ENCODE measurements at regions of chr14 and their contacts with region 1.

Region 1: DNA sequence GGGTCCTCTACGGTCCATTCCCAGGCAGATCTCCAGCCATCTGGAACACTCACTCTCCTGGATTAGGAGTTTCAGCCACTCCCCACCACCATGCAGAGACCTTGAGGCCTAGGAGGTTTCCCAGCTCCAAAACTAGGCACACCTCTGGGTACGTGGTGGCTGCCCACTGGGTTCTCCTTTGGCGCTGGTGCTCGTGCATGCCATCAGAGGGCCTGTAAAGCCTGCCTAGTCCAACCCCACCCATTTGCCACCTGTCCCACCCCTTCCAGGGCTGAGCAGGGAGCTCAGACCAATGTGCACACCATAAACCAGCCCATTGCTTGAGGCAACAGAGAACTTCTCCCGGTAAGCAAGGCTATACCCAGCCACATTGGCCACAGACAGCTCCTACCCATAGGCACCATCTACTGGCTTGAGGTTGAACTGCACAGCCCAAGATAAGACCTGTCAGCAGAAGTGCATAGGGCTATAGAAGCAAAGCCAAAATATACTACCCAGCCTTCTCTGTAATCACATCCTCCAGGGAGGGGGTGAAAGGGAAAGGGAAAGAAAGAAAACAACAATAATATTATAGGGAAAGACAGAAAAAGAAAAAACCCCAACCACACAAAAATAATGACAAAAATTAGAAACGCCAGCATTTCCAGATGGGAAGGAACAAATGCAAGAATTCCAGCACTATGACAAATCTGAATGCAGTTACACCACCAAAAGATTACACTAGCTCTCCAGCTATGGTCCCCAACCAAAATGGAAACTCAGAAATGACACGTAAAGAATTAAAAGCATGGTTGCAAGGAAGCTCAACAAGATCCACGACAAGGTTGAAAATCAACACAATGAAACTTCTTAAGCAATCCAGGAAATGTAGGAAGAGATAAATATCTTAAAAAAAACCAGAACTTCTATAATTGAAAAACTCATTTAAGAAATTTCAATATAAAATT is 111.9 kb upstream of the CCDC175 start:
- DNase-seq: peak; percentile 65
- H3K4me3 Mint-ChIP-seq: no peak overlapping the region
- H3K27ac Mint-ChIP-seq: no peak overlapping the region
- H3K4me1 Mint-ChIP-seq: no peaks in the 10 kb centered on the region
- H3K27me3 Mint-ChIP-seq: peaks cover 33% of the 10 kb centered on the region

Region 2: DNA sequence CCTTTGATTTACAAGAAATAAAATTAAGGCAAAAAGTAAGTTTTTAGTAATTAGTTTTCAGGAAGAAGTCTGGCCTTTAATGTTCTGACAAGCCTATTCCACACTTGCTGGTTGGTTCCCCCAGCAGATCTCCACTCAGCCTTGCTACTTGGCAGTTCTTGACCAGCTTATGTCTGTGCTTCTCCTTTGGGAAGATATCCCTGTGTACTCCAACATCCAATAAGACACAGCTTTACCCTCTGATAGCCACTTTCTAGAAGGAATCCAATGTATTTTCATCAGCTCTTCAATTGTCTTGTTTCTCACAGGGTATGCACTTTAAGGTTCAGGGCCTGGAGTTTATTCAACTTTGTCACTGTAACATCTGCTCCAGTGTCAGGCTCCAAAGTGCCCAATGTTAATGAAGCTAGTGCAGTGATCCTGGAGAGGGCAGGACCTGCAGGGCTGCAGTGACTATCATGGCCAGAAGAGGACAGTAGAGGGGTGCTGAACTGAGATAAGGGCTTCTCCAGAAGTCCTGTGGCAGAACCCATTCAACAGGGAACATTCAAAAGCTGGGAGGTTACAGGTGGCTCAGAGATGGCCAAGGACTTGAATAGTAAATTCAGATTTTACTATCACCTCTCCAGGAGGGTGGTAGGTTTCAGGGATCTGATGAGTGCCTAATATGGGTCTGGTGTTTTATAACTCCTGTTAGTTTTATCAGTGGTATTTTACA is 181.3 kb before region 1 on chr14:
- CTCF ChIA-PET with region 1: no interaction called
- intact Hi-C with region 1: loop called (anchors 1 kb)
- DNase-seq: peak; percentile 74
- H3K4me3 Mint-ChIP-seq: no peak overlapping the region
- H3K27ac Mint-ChIP-seq: no peak overlapping the region
- H3K4me1 Mint-ChIP-seq: peaks cover 7% of the 10 kb centered on the region
- H3K27me3 Mint-ChIP-seq: peaks cover 5% of the 10 kb centered on the region

Region 3: DNA sequence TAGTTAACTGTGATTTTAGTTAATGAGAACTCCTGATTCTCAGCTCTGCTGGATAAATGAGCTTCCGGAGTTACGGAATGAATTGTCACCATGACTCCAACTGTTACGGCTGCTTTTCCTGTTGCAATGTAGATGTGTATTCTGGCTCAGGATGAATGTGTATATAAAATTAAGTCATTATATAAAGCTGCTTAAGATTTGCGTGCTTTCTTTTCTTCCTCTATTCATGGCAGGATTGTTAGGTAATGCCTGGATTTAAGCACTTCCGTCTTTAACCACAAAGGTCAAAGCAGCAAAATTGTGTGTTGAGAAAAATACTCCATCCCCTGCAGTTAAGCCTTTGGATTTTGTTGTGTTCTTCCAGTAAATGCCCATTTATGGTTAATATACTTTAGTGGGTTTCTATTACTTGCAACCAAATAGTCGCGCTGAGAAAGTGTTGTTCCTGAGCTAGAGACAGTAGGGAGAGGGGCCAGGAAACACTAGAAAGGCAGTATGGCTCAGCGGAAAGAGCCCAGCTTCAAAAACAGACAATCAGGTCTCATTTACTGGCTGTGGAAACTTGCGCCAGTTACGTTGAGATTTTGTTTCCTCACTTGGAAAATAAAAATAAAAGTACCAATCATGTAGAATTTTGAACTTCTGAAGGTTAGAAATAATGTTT is 102.5 kb before region 1 on chr14:
- CTCF ChIA-PET with region 1: no interaction called
- intact Hi-C with region 1: loop called (anchors 2 kb)
- DNase-seq: no peak
- H3K4me3 Mint-ChIP-seq: peak overlapping the region; percentile 19
- H3K27ac Mint-ChIP-seq: no peak overlapping the region
- H3K4me1 Mint-ChIP-seq: peaks cover 4% of the 10 kb centered on the region
- H3K27me3 Mint-ChIP-seq: no peaks in the 10 kb centered on the region

Region 4: DNA sequence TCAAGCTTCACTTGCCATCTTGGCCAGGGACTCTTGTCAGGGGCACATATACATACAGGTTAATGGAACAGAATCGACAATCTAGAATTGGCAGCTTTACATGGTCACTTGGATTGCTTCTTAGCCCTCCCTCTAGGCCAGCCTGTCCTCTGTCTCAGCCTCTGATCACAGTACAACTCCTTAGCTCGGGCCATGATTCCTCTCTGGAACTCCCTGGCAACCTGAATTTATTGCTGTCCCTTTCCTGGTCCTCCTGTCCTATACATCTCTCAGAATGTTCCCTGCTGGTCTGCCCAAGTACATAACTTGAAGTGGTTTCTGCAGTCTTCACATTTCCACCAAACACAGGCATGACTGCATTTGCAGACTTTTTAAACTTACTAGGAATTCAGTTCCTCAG is 32.0 kb before region 1 on chr14:
- CTCF ChIA-PET with region 1: no interaction called
- intact Hi-C with region 1: no loop called
- DNase-seq: no peak
- H3K4me3 Mint-ChIP-seq: no peak overlapping the region
- H3K27ac Mint-ChIP-seq: no peak overlapping the region
- H3K4me1 Mint-ChIP-seq: no peaks in the 10 kb centered on the region
- H3K27me3 Mint-ChIP-seq: no peaks in the 10 kb centered on the region

Region 5: DNA sequence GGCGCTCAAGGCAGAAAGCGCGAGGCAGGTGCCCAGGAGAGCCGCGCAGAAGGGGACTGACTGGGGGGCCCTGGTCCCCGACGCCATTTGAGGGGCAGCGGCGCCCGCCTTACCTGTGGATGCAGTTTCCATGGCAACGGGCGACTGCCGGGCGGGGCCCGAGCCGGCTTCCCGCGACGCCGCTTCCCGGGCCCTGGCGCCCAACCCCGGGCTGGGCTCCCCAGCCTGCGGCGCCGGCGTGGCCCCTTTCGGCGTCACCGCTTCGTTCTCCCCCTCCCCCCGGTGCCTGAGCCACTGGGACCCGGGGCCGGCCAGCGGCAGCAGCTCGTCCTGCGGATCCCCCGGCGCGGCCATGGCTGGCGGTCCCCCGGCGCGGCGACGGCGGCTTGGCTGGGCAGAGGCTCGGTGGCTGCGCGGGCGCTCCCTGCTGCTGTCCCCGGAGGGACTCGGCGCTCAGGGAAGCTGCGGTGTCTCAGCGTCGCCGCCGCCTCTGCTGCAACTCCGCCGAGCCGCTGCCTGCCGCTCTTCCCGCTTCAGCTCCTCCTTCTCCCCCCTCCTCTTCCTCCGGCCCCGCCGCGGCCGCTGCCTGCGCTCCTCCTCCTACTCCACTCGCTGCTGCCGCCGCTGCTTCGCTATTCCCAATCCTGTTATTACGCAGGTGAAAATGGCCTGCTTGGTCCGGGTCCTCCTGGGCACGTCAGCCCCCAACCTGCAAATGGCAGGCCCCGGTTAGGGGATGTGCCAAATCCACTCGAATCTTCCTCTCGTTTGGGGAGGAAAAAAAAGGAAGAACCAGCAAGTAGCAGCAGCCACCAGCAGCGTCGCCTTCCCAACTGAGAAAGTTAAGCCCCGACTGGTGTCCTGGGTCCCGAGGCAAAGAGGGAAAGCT is 182.0 kb after region 1 on chr14 and contains the start of gene RTN1:
- CTCF ChIA-PET with region 1: no interaction called
- intact Hi-C with region 1: no loop called
- DNase-seq: peak; percentile 38
- H3K4me3 Mint-ChIP-seq: peak within 1 kb of the TSS; percentile 77
- H3K27ac Mint-ChIP-seq: no peak within 1 kb of the TSS
- H3K4me1 Mint-ChIP-seq: peaks cover 7% of the 10 kb centered on the region
- H3K27me3 Mint-ChIP-seq: peaks cover 40% of the 10 kb centered on the region
- total RNA-seq, gene RTN1: not detected

Measured in activated naive CD4-positive, alpha-beta T cell treated with anti-CD3 and anti-CD28 coated beads for 36 hours (primary cell).